ENCODE measurements at regions of chr15 and their contacts with region 1.

Region 1: DNA sequence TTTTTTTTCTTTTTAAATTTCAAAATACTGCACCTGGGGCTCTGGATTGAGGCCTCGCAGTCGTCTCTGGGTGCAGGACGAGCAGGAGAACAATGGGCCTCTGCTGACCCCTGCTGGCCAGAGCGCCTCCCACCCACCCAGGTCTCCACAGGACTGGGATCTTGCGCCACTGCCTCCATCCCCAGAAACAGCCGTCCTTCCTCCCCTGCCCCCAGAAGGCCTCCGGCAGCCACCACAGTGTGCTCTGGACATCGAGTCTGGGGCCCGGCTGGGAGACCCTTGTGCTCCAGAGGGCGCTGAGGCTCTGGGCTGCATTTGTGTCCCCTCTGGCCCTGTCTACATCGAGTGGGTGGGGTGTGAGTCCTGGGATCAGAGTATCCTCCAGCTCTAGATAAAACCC is 6.6 kb upstream of the ACSBG1 start:
- DNase-seq: peak; percentile 94

Region 2: DNA sequence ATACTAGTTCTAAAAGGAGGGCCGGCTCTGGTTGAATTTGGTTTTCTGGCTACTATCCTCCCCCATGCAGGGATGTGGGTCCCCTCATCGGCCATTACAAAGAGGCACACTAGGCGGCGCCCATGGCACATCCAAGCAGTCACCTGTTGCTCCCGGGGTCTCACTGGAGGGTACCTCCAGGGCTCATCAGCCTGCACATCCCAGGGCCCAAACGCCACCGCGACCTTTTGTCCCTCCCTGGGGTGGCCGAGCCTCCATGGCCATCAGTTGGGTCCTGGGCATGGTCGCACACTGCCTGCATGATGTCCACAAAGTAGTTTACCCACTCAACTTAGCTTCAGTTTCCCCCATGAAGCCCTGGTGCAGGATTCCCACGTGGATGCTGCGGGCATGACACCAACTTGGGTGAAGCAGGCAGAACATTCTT is 63.5 kb before region 1 on chr15:
- CTCF ChIA-PET with region 1: interaction called, 58 read pairs
- POLR2A ChIA-PET with region 1: interaction called, 3 read pairs
- DNase-seq: peak; percentile 79

Region 3: DNA sequence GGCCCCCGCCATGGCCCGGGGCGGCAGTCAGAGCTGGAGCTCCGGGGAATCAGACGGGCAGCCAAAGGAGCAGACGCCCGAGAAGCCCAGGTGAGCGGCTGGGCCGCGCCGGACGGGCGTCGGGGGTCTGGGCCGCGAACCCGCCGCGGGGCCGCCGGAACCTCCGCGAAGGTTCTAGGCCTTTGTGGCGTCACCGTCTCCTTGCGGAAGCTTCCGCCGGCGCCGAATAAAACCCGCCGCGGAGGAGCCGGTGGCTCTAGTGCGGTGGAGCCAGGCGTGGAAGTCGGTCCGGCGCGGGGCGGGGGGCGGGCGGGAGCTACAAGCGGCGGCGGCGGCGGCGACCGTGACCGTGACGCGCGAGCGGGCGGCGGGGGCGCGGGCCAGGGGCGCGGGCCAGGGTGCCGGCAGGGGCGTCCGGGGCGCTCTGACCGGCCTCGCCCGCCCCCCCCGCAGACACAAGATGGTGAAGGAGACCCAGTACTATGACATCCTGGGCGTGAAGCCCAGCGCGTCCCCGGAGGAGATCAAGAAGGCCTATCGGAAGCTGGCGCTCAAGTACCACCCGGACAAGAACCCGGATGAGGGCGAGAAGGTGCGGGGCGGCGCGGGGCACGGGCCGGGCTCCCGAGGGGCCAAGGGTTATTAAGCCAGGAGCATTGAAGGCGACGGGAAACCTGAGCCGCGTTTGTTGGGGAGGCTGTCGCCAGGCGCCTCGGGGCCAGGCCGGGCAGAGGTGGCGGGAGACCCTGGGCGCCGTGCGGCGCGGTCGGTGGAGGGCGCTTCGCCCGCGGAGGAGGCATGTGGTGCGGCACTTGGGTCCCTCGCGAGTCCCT is 23.5 kb after region 1 on chr15 and contains the start of gene DNAJA4:
- CTCF ChIA-PET with region 1: no interaction called
- POLR2A ChIA-PET with region 1: no interaction called
- DNase-seq: no peak

Region 4: GRCh38 chr15:78322243-78322642 is 81.2 kb after region 1 on chr15:
- CTCF ChIA-PET with region 1: no interaction called
- POLR2A ChIA-PET with region 1: no interaction called
- DNase-seq: no peak